ENCODE measurements at regions of chr12 and their contacts with region 1.

Region 1: GRCh38 chr12:117671734-117672133 is 297.1 kb downstream of the KSR2 start:
- DNase-seq: no peak
- H3K4me3 ChIP-seq: no peak overlapping the region
- CTCF ChIP-seq: peak; percentile 64

Region 2: DNA sequence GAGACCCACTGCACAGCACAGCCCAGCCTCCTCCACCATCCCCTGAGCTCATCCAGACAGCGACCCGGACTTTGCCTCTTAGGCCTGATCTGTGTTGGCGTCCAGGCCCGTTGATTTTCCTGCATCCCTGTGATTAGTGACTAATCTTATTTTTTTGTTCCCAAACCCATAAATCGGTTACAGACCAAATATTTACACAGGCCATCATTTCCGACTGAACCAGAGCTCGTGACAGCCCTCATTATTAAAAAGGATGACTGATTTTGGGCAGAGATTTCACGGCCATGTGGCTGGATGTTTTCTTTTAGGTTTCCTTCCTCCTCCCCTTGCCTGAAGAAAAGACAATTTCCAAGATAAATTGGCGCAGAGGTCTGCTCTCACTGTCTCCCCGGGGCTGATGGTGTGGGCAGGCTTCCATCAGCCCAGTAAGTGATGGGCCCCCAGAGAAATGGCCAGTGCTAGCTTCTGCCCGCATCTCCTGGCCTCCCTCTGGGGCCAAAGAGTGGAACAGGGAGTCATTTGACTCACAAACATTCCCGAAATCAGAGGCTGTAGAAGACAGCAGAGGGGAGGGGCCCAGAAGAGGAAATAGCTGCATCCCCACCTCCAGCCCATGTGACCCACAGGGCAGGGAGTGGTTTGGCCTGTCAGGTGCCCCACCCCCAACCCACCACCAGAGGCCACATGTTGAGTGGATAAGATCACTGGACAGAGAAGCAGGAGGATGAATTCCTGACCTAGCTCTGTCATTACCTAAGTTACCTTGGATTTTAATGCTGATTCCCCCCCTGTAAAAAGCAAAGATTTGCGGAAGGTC is 13.6 kb after region 1 on chr12:
- CTCF ChIA-PET with region 1: interaction called, 19 read pairs
- POLR2A ChIA-PET with region 1: interaction called, 3 read pairs
- DNase-seq: peak; percentile 44
- H3K4me3 ChIP-seq: no peak overlapping the region
- CTCF ChIP-seq: no peak

Region 3: GRCh38 chr12:117792471-117793424 is 121.0 kb after region 1 on chr12:
- CTCF ChIA-PET with region 1: no interaction called
- POLR2A ChIA-PET with region 1: no interaction called
- DNase-seq: no peak
- H3K4me3 ChIP-seq: no peak overlapping the region
- CTCF ChIP-seq: no peak

Measured in AG04449 (cell line).